Activated CD4-positive, alpha-beta T cell treated with anti-CD3 and anti-CD28 coated beads for 36 hours (primary cell): ENCODE measurements at regions of chr15 and their contacts with region 1.

Region 1: DNA sequence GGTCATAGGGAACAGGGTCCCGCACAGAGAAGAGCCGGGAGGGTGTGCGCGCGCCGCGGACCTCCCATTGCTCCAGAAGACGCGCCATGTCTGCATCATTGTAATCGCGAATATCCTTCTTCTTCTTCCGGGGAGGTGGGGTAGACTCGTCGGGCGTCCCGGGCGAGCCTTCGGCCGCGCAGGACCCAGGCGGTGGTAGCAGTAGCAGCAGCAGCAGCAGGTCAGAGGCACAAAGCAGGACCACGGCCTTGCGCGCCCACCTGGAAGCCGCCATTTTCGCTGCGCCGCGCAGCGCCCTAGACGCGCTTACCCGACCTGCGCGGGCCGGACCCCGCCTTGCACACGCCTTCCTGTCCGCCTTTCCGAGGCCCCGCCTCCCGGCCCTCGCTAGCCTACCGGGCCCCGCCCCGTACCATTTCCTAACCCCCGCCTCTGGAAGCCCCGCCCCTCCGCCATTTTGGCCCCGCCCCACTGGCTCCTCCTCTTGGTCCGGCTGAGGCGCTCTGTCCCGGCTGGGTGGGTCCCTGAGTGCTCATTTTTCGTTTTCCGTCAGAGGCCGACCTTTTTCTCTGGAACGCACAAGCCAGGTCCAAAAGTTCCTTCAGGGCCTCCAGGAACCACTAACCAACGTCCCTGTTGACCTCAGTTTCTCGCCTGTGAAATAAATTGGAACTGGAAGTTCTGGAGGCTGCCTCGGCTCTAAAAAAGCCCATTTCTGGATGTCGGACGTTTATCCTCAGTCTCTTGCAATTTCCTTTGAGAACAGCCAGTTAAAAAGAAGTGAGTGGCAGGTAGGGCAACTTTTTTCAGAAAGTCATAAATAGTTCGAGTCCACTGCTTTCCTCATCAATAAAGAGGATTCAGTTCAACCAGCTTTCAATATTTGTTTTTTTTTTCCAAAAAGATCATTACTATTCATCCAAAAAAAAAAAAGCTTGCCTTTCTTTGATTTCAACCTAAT is at the start of gene MESD:
- DNase-seq: peak; percentile 99
- ATAC-seq: peak; percentile 99
- H3K4me3 Mint-ChIP-seq: peak within 1 kb of the TSS; percentile 94
- H3K27ac Mint-ChIP-seq: peak within 1 kb of the TSS; percentile 89
- H3K4me1 Mint-ChIP-seq: peaks cover 50% of the 10 kb centered on the region
- H3K27me3 Mint-ChIP-seq: no peaks in the 10 kb centered on the region
- total RNA-seq, gene MESD: 18.6 to 21.7 TPM

Region 2: DNA sequence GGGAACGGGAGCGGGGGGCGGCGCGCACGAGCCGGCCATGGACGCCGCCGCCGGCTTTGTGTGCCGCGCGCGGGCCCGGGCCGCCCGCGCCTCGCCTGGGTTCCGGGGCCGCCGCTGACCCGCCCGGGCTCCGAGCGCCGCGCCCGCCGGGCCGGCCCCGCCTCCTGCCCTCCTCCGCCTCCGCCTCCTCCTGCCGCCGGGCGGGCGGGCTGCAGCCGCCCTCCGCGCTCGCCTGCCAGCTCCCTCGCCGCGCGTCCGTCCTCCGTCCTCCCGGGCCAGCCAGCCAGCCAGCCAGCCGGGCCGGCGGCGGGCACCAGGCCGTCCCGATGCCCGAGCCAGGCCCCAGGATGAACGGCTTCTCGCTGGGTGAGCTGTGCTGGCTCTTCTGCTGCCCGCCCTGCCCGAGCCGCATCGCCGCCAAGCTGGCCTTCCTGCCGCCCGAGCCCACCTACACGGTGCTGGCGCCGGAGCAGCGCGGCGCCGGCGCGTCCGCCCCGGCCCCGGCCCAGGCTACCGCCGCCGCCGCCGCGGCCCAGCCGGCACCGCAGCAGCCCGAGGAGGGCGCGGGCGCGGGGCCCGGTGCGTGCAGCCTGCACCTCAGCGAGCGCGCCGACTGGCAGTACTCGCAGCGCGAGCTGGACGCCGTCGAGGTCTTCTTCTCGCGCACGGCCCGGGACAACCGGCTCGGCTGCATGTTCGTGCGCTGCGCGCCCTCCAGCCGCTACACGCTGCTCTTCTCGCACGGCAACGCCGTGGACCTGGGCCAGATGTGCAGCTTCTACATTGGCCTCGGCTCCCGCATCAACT is 294.5 kb before region 1 on chr15 and contains the start of gene ABHD17C:
- CTCF ChIA-PET with region 1: no interaction called
- POLR2A ChIA-PET with region 1: no interaction called
- intact Hi-C with region 1: loop called in 1 of 2 experiments (anchors 2 kb)
- DNase-seq: peak; percentile 67
- ATAC-seq: peak; percentile 68
- H3K4me3 Mint-ChIP-seq: peak within 1 kb of the TSS; percentile 85
- H3K27ac Mint-ChIP-seq: peak within 1 kb of the TSS; percentile 87
- H3K4me1 Mint-ChIP-seq: peaks cover 18% of the 10 kb centered on the region
- H3K27me3 Mint-ChIP-seq: peaks cover 9% of the 10 kb centered on the region
- total RNA-seq, gene ABHD17C: 5.8 to 6.7 TPM

Region 3: DNA sequence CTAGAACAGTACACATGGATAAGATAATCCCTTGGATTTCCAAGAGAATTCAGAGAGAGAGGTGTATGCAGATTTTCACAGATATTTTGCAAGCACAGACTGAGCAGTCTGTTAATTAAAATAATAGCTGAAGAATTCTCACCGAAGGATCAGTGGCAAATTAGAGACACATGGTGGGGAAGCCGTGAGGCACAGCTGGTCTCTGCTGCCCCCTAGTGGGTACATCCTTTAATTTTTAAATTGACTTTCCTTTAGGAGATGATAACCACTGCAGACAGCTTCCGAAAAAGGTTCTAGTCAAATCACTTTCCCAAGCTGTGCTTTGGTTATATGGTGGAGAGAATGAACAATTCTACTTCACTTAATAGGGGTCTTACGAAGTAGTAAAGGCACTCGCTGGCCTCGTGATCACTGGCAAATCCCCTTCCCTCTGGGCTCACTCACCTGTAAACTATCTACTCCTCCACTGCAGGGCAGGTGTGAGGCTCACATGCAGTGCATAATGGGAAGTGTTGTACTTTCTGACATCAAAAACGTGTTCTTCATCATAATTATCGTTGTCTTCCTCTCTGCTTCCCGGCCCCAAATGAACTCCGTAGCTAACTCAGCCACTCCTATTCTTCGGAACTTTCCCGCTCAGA is 19.7 kb before region 1 on chr15:
- CTCF ChIA-PET with region 1: interaction called, 10 read pairs
- POLR2A ChIA-PET with region 1: no interaction called
- intact Hi-C with region 1: no loop called
- DNase-seq: peak; percentile 76
- ATAC-seq: peak; percentile 74
- H3K4me3 Mint-ChIP-seq: no peak overlapping the region
- H3K27ac Mint-ChIP-seq: no peak overlapping the region
- H3K4me1 Mint-ChIP-seq: peaks cover 4% of the 10 kb centered on the region
- H3K27me3 Mint-ChIP-seq: no peaks in the 10 kb centered on the region

Region 4: DNA sequence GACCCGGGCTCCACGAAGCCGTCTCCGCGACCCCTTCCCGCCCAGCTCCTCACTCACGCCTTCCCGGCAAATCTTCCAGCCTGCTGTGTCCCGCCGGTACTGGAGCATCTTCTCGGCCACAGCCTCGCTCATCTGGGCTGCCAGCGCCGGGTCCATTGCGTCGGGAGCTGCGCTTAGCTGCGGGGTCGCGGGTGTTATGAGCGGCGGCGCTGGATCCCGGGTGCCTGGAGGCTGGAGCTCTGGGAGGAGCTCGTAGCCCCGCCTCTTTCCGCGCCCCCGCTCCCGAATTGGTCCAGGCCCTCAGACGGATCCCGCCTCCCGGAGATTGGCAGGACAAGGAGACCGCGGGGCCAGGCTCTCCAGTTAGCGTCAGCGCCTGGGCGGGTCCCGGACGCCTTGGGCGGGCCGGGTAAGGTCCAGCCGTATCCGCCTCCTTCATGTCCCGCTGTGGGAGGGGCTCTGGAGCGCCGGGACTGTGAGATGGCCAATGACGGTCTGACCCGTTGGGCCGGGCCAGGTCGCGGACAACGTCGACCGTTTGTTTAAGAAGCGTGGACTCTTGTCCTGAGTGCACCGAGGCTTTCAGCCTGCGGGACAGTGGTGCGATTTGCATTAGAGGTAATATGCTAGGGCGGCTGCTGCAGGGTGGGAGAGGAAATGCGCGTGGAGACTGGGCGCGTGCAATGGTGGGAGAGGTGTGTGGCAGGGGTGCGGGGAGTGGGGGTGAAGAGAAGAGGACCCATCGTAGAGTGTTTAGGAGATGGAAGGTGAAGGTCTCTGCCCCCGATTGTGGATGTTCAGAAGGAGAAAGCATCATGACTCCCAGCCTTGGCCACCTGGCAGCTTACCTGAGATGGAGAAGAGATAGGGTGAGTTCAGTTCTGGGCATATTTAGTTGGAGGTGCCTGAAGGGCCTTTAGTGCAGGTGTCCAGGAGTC is 334.4 kb after region 1 on chr15 and contains the start of gene STARD5:
- CTCF ChIA-PET with region 1: no interaction called
- POLR2A ChIA-PET with region 1: no interaction called
- intact Hi-C with region 1: loop called in 1 of 2 experiments (anchors 1 kb)
- DNase-seq: peak; percentile 98
- ATAC-seq: peak; percentile 99
- H3K4me3 Mint-ChIP-seq: peak within 1 kb of the TSS; percentile 95
- H3K27ac Mint-ChIP-seq: peak within 1 kb of the TSS; percentile 90
- H3K4me1 Mint-ChIP-seq: peaks cover 27% of the 10 kb centered on the region
- H3K27me3 Mint-ChIP-seq: no peaks in the 10 kb centered on the region
- total RNA-seq, gene STARD5: 8.9 to 9.2 TPM

Region 5: DNA sequence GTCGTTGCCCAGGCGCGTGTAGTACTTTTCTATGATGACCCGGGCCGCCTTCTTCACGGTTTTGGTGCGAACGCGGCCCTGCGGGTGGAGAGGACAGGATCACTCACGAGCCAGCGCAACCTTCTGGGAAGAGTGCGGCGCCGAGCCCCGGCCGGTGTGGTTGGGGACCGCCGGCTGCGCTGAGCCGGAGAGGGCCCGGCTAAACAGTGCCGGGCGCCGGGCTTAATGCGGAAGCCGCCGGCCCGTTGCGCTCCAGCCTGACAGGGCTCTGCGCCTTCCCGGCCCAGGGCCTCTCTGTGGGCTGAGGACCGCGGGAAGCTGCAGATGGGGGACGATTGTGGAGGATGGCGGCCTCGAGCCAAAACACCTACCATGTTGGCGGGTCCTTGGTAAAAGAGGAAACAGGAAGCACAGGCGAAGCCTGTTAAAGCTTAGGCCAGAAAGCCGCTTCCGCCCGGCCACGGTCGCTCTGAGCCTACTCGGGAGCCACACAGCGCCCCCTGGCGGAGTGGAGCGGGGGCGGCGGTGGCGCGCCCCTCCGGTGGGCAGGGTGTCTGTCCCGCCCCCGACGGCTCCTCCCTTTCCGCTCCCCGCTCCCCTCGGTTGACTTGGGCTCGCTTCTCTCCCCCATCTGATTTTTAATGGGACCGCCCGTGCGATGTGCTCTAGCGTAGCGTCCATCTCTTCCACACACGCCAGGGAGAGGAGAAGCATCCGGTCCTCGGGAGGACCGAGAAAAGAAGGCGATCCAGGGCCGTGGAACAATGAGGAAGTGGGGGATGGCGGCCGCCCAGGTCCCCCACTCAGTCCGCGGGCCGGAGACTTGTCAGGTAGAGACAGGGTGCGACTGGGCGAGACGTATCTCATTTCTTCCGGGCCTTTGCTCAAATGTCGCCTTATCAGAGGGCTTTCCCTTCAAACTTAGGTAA is 1550.5 kb after region 1 on chr15 and contains the start of gene RPS17:
- CTCF ChIA-PET with region 1: no interaction called
- POLR2A ChIA-PET with region 1: no interaction called
- intact Hi-C with region 1: loop called in 1 of 2 experiments (anchors 5 kb)
- DNase-seq: peak; percentile 99
- ATAC-seq: peak; percentile 93
- H3K4me3 Mint-ChIP-seq: peak within 1 kb of the TSS; percentile 96
- H3K27ac Mint-ChIP-seq: peak within 1 kb of the TSS; percentile 96
- H3K4me1 Mint-ChIP-seq: peaks cover 23% of the 10 kb centered on the region
- H3K27me3 Mint-ChIP-seq: no peaks in the 10 kb centered on the region
- total RNA-seq, gene RPS17: 2,882 to 3,294 TPM